ENCODE measurements at regions of chr14 and their contacts with region 1.

Region 1: GRCh38 chr14:88492272-88493089 is 62.3 kb downstream of the PTPN21 start:
- DNase-seq: no peak
- H3K4me3 ChIP-seq: no peak overlapping the region
- H3K27ac ChIP-seq: no peak overlapping the region
- H3K4me1 ChIP-seq: no peaks in the 10 kb centered on the region
- H3K27me3 ChIP-seq: no peaks in the 10 kb centered on the region
- CTCF ChIP-seq: peak; percentile 74 to 85 (median 76)
- POLR2A ChIP-seq: no peak

Region 2: GRCh38 chr14:88504602-88505001 is 12.1 kb after region 1 on chr14:
- intact Hi-C with region 1: loop called (anchors 1 kb)
- DNase-seq: no peak
- H3K4me3 ChIP-seq: no peak overlapping the region
- H3K27ac ChIP-seq: no peak overlapping the region
- H3K4me1 ChIP-seq: no peaks in the 10 kb centered on the region
- H3K27me3 ChIP-seq: no peaks in the 10 kb centered on the region
- CTCF ChIP-seq: no peak
- POLR2A ChIP-seq: no peak